ENCODE measurements at regions of chr7 and their contacts with region 1.

Region 1: DNA sequence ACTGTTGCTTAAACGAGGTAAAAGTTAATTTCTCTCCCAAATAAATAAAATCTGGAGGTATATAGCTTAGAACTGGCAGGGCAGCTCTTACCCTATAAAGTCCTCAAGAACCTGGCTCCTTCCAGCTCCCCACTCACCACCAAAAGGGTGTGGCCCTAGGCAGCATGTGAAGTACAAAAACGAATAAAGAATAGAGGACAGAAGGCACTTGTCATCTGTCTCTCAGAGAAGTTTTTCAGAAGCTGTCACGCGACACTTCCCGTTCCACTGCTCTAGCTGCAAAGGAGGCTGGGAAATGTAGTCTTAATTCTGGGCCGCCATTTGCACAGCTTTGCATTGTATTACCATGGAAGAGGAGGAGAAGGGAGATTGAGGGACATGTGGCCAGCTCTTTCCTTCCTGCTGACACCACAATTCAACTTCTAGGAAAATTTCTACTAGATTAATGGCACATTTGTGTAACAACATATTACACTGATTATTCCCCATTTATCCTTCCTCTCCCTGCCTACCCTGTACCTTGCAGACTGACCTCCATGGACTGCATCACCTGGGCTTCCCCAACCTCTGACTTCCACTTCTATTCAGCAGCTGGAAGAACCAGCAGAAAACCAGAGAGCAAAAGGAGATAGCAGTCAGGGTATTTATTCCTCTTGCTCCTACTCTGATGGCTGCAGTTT is 62.2 kb downstream of the CCDC71L start:
- DNase-seq: peak; percentile 71
- ATAC-seq: peak; percentile 99
- H3K4me3 ChIP-seq: no peak overlapping the region
- H3K27ac ChIP-seq: no peak overlapping the region
- H3K4me1 ChIP-seq: no peaks in the 10 kb centered on the region
- H3K27me3 ChIP-seq: no peaks in the 10 kb centered on the region; a peak in 1 of 4 replicates
- CTCF ChIP-seq: no peak
- EP300 ChIP-seq: no peak
- POLR2A ChIP-seq: no peak
- RAD21 ChIP-seq: no peak

Region 2: GRCh38 chr7:106588422-106589198 is 10.2 kb before region 1 on chr7:
- CTCF ChIA-PET with region 1: no interaction called
- POLR2A ChIA-PET with region 1: interaction called, 3 read pairs
- RAD21 ChIA-PET with region 1: no interaction called
- SMC1A ChIA-PET with region 1: interaction called, 10 read pairs
- in situ Hi-C with region 1: no loop called
- intact Hi-C with region 1: no loop called
- DNase-seq: no peak
- ATAC-seq: no peak
- H3K4me3 ChIP-seq: no peak overlapping the region
- H3K27ac ChIP-seq: no peak overlapping the region
- H3K4me1 ChIP-seq: no peaks in the 10 kb centered on the region
- H3K27me3 ChIP-seq: no peaks in the 10 kb centered on the region
- CTCF ChIP-seq: no peak
- EP300 ChIP-seq: no peak
- POLR2A ChIP-seq: no peak
- RAD21 ChIP-seq: no peak

Region 3: DNA sequence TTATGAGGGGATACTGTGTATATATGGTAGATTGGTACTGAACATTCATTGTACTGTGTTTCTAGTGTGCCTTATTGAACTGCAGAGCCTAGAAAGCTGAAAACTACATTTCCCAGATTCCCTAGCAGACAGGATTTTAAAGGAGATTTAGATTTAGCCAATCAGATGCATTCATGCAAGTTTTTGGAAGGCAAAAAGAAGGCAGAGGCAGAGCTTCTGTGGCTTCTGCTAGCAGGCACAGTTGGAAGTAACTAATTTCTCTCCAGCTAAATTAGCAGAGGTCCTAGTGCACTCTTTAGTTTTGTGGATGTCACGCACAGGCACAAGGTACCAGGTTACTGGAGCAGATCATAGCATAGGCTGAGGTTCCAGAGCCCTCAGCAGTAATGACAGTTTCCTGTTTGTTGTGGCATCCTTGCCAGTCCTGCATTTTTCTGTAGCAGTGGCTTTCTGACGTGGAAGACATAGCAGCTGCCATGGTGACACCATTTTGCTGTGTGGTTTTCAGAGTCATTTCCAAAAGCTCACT is 145.8 kb after region 1 on chr7:
- CTCF ChIA-PET with region 1: no interaction called
- POLR2A ChIA-PET with region 1: no interaction called
- RAD21 ChIA-PET with region 1: no interaction called
- SMC1A ChIA-PET with region 1: no interaction called
- in situ Hi-C with region 1: no loop called
- intact Hi-C with region 1: no loop called
- DNase-seq: no peak
- ATAC-seq: peak; percentile 42
- H3K4me3 ChIP-seq: no peak overlapping the region
- H3K27ac ChIP-seq: no peak overlapping the region
- H3K4me1 ChIP-seq: no peaks in the 10 kb centered on the region
- H3K27me3 ChIP-seq: no peaks in the 10 kb centered on the region
- CTCF ChIP-seq: no peak
- EP300 ChIP-seq: no peak
- POLR2A ChIP-seq: no peak
- RAD21 ChIP-seq: no peak